Ovary (tissue), 10 donors: ENCODE measurements at regions of chr10 and their contacts with region 1.

Region 1: GRCh38 chr10:100969187-100970075 is at the start of gene SEMA4G:
- DNase-seq: peak; percentile 59 to 78 (median 75)
- H3K4me3 ChIP-seq: peak within 1 kb of the TSS; percentile 76
- H3K27ac ChIP-seq: peak within 1 kb of the TSS in 1 of 2 donors; percentile 24
- H3K4me1 ChIP-seq: peaks cover 8% of the 10 kb centered on the region
- H3K27me3 ChIP-seq: no peaks in the 10 kb centered on the region
- CTCF ChIP-seq: peak; percentile 47 to 73 (median 67)
- EP300 ChIP-seq: no peak
- POLR2A ChIP-seq: no peak
- total RNA-seq, gene SEMA4G: 5.9 to 24.9 (median 13.1) TPM

Region 2: DNA sequence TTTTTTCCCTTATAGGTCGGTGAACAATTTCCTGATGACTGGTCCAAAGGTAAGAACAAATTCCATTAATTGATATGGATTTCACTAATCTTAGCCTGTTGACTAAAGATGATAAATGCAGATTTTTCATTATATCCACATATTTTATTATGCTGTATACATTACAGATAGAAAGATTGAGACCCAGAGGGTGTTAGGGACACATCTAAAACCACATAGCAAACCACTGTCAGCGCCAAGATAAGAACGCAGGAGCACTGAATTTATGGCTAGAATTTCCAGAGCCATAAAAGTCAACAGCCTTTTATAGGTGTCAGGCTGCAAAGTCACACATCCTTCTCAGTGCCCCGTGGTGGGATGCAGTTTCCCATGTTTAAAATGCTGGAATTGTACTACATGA is 490.4 kb before region 1 on chr10:
- intact Hi-C with region 1: no loop called
- DNase-seq: no peak
- H3K4me3 ChIP-seq: no peak overlapping the region
- H3K27ac ChIP-seq: no peak overlapping the region
- H3K4me1 ChIP-seq: peaks cover 7% of the 10 kb centered on the region
- H3K27me3 ChIP-seq: no peaks in the 10 kb centered on the region
- CTCF ChIP-seq: no peak
- EP300 ChIP-seq: no peak
- POLR2A ChIP-seq: no peak

Region 3: DNA sequence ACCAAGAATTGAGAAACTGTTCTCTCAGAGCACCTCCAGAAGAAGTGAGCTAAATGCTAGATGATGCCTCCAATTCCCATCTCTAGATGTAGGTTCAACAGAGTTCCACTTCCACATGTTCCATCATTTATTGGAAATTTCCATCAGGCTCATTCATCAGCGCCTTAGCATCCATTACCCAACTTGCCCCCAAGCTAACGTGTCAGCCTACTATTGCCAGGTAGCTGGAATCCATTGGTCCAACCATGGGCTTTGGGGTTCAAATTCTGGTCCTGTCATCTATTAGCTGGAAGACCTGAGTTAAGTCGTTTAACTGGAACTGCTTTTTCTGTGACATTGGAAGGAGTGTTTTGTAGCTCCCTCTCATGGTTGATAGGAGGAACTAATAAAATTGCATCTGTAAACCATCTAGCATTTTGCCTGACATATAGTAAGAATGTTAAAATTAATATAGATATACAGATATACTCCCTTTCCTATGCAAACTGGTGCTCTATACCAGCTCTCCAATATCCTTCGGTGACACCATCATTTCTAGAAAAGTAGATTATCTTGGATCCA is 80.6 kb before region 1 on chr10:
- intact Hi-C with region 1: loop called in 1 of 4 experiments (anchors 10 kb)
- DNase-seq: no peak
- H3K4me3 ChIP-seq: no peak overlapping the region
- H3K27ac ChIP-seq: no peak overlapping the region
- H3K4me1 ChIP-seq: peaks cover 3% of the 10 kb centered on the region
- H3K27me3 ChIP-seq: no peaks in the 10 kb centered on the region
- CTCF ChIP-seq: no peak
- EP300 ChIP-seq: no peak
- POLR2A ChIP-seq: no peak